Activated naive CD4-positive, alpha-beta T cell treated with anti-CD3 and anti-CD28 coated beads, Interleukin-2, amount 10 ng/mL, durations not matched to agents 7 days and 5 days (primary cell): ENCODE measurements at regions of chr15 and their contacts with region 1.

Region 1: DNA sequence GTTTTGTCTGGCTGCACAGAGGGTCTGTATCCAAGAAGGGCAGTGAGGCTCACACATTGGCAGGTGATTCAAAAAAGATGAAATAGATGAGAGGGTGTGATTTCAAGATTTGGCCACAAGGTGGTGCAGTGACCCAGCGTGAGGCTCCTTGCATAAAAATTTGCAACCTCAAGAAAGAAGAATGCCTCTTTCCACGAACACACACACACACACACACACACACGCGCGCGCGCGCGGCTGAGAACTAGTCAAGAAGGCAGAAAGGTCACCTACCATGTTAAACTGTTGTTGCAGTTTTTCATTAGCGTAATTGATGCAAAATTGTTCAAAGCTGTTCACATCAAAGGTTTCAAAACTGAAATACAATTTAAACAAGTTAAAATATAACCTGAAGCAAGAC is 39.2 kb downstream of the MYO5C start:
- DNase-seq: peak; percentile 83
- H3K4me3 Mint-ChIP-seq: peak overlapping the region; percentile 48
- H3K27ac Mint-ChIP-seq: peak overlapping the region; percentile 84
- H3K4me1 Mint-ChIP-seq: peaks cover 56% of the 10 kb centered on the region
- H3K27me3 Mint-ChIP-seq: peaks cover 17% of the 10 kb centered on the region

Region 2: DNA sequence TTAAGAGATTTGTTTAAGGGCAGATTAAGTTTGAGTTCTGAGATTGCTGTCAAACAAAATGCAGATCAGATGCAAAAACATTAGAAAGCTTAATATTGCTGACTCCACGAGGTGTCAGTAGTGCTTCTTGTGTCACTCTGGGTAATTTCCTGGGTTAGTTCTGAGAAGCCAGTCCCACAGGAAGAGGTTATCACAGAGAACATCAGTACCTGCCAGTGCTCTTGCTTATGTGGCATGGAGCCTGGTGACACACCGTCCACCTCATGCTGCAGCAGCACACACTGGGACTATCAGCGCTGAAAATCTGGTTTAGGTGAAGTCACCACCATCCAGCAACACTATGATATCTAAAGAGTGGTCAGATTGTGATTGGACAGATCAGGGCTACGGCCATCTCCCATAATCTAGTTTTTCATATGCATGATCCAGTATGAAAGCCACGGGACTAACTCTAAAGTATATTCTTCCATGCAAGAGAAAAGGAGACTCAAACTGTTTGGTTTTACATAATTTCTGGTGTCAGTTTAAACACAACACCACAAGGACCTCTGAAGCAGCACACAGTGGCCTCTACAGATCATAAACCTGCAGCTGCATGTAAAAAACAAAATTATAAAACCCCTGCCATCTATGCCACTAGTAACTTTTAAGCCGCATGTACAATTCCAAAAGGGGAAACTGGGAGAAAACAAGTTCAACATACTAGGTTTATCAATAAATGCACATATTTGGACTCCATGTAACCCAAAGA is 75.3 kb after region 1 on chr15:
- CTCF ChIA-PET with region 1: interaction called, 20 read pairs
- DNase-seq: peak; percentile 70
- H3K4me3 Mint-ChIP-seq: peak overlapping the region; percentile 16
- H3K27ac Mint-ChIP-seq: peak overlapping the region; percentile 76
- H3K4me1 Mint-ChIP-seq: peaks cover 38% of the 10 kb centered on the region
- H3K27me3 Mint-ChIP-seq: no peaks in the 10 kb centered on the region

Region 3: DNA sequence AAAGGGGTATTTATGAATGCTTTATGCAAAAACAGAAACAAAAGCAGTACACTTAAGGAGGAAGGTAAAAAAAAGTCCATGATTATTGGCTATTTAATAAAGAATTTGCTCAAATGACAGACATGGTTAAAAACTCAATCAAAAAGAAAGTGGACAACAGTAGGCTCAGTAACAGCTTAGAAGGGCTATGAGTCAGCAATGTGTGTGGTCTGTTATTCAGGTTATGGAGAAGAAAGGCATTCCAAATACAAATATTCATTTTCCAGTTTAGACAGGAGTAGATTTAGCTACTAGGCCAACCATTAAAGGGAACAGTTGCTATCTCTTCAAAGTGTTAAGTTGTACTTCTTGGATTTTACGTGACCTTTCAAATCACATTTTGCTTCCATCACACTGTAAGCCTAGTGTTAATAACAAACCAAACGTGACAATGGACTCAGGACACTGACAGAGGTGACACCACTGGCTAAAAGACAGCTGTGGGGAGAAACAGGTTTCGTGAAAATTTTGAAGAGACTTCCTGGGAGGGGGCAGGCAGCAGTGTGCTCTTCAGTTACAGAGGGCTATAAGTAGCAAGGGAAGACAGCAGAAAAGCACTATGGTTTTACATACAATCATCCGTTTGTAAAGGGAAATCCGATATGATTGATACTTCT is 81.0 kb after region 1 on chr15:
- CTCF ChIA-PET with region 1: interaction called, 20 read pairs
- DNase-seq: no peak
- H3K4me3 Mint-ChIP-seq: no peak overlapping the region
- H3K27ac Mint-ChIP-seq: peak overlapping the region; percentile 19
- H3K4me1 Mint-ChIP-seq: peaks cover 29% of the 10 kb centered on the region
- H3K27me3 Mint-ChIP-seq: no peaks in the 10 kb centered on the region

Region 4: GRCh38 chr15:52730173-52730572 is 473.8 kb after region 1 on chr15:
- CTCF ChIA-PET with region 1: interaction called, 80 read pairs
- DNase-seq: peak; percentile 52
- H3K4me3 Mint-ChIP-seq: no peak overlapping the region
- H3K27ac Mint-ChIP-seq: peak overlapping the region; percentile 70
- H3K4me1 Mint-ChIP-seq: peaks cover 51% of the 10 kb centered on the region
- H3K27me3 Mint-ChIP-seq: no peaks in the 10 kb centered on the region

Region 5: GRCh38 chr15:52735231-52736089 is 479.1 kb after region 1 on chr15:
- CTCF ChIA-PET with region 1: interaction called, 80 read pairs
- DNase-seq: peak; percentile 77
- H3K4me3 Mint-ChIP-seq: no peak overlapping the region
- H3K27ac Mint-ChIP-seq: no peak overlapping the region
- H3K4me1 Mint-ChIP-seq: peaks cover 35% of the 10 kb centered on the region
- H3K27me3 Mint-ChIP-seq: peaks cover 11% of the 10 kb centered on the region